ENCODE measurements at regions of chr1 and their contacts with region 1.

Region 1: DNA sequence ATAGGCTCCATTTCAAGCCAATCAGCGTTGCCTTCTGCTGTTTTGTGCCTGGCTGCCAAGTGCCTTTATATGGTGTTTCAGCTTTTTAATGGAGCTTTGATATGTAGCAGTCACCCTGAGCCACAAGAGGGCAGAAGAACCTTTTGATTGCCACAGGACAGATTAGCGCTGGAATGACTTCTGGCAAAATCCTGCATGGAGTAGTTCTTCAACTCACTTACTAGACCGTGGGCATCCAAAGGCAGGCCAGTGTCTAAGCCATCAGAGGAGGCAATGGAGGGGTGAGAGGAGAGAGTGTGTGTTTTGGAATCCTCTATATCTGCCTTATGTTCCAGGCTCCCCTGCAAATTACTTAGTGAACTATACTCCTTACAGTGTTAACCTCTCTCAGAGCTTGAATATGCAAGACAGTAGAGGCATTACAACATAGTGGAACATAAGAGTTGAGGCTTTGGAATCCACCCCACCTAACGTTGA is 56.2 kb downstream of the ST3GAL3 start:
- DNase-seq: peak; percentile 64
- ATAC-seq: peak; percentile 66
- H3K4me3 Mint-ChIP-seq: no peak overlapping the region
- H3K27ac Mint-ChIP-seq: no peak overlapping the region
- H3K4me1 Mint-ChIP-seq: peaks cover 16% of the 10 kb centered on the region
- H3K27me3 Mint-ChIP-seq: no peaks in the 10 kb centered on the region
- CTCF ChIP-seq: peak; percentile 72

Region 2: DNA sequence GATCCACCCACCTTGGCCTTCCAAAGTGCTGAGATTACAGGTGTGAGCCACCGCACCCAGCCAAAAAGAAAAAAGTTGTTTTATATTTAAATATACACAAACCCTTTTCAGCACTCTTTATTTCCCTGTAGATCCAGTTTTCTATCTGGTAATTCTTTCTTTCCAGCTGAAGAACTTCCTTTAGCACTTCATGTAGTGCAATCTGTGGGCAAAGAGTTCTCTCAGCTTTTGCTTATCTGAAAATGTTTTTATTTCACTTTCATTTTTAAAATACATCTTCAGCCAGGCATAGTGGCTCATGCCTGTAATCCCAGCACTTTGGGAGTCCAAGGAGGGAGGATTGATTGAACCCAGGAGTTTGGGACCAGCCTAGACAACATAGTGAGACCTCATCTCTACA is 281.3 kb before region 1 on chr1:
- CTCF ChIA-PET with region 1: no interaction called
- POLR2A ChIA-PET with region 1: no interaction called
- DNase-seq: no peak
- ATAC-seq: no peak
- H3K4me3 Mint-ChIP-seq: no peak overlapping the region
- H3K27ac Mint-ChIP-seq: no peak overlapping the region
- H3K4me1 Mint-ChIP-seq: no peaks in the 10 kb centered on the region
- H3K27me3 Mint-ChIP-seq: peaks cover 8% of the 10 kb centered on the region
- CTCF ChIP-seq: no peak

Region 3: GRCh38 chr1:43796111-43796581 is 32.6 kb after region 1 on chr1:
- CTCF ChIA-PET with region 1: interaction called, 13 read pairs
- POLR2A ChIA-PET with region 1: no interaction called
- DNase-seq: no peak
- ATAC-seq: no peak
- H3K4me3 Mint-ChIP-seq: no peak overlapping the region
- H3K27ac Mint-ChIP-seq: no peak overlapping the region
- H3K4me1 Mint-ChIP-seq: no peaks in the 10 kb centered on the region
- H3K27me3 Mint-ChIP-seq: no peaks in the 10 kb centered on the region; the same call in 1 of the 2 replicates
- CTCF ChIP-seq: no peak

Region 4: DNA sequence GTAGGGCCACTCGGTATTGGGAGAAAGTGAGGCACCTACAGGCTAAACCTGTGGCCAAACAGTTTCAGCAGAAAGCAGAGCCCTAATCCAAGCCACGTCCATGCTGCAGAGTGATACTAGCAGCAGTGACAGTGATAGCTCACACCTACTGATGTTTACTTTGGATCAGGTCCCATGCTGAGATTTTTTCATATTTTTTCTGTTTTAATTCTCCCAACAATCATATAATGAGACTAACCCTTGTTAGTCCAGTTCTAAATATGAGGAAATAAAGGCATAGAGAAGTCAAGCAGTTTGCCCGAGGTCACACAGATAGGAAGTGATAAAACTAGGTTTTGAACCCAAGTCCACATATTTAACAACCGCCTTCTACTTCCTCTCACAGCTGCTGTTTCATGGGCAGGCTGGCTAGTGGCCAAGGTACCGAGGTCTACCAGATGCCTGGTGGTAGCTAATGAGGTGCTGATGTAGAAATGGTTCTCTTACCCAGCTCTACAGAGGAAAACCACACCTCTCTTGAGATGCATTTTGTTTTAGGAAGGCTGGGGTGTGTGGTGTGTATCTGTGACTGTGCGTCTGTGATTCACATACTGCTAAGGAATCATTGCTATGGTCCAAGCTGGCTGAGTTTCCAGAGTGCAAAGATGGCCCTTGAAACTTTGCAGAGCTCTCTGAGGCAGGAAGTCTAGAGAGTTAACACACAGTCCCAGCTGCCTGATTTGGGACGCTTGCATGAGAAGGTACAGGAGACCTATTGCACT is 89.8 kb after region 1 on chr1:
- CTCF ChIA-PET with region 1: interaction called, 11 read pairs
- POLR2A ChIA-PET with region 1: no interaction called
- DNase-seq: no peak
- ATAC-seq: 0 out of 2 replicates have a peak, but pooled peaks have one; percentile 24
- H3K4me3 Mint-ChIP-seq: no peak overlapping the region
- H3K27ac Mint-ChIP-seq: no peak overlapping the region
- H3K4me1 Mint-ChIP-seq: peaks cover 14% of the 10 kb centered on the region
- H3K27me3 Mint-ChIP-seq: no peaks in the 10 kb centered on the region; the same call in 1 of the 2 replicates
- CTCF ChIP-seq: no peak

Region 5: GRCh38 chr1:43924516-43924915 is 161.0 kb after region 1 on chr1:
- CTCF ChIA-PET with region 1: interaction called, 992 read pairs
- POLR2A ChIA-PET with region 1: no interaction called
- DNase-seq: no peak
- ATAC-seq: no peak
- H3K4me3 Mint-ChIP-seq: no peak overlapping the region
- H3K27ac Mint-ChIP-seq: no peak overlapping the region
- H3K4me1 Mint-ChIP-seq: peaks cover under 1% of the 10 kb centered on the region
- H3K27me3 Mint-ChIP-seq: no peaks in the 10 kb centered on the region; the same call in 1 of the 2 replicates
- CTCF ChIP-seq: no peak

Region 6: GRCh38 chr1:43952731-43953346 is 189.3 kb after region 1 on chr1:
- CTCF ChIA-PET with region 1: interaction called, 75 read pairs
- POLR2A ChIA-PET with region 1: no interaction called
- DNase-seq: peak; percentile 66
- ATAC-seq: peak; percentile 96
- H3K4me3 Mint-ChIP-seq: no peak overlapping the region
- H3K27ac Mint-ChIP-seq: peak overlapping the region; percentile 50; the same call in 1 of the 2 replicates
- H3K4me1 Mint-ChIP-seq: peaks cover 18% of the 10 kb centered on the region
- H3K27me3 Mint-ChIP-seq: no peaks in the 10 kb centered on the region
- CTCF ChIP-seq: no peak

Region 7: GRCh38 chr1:43991476-43992231 is 228.1 kb after region 1 on chr1 and contains the start of gene CCDC24:
- CTCF ChIA-PET with region 1: interaction called, 16 read pairs
- POLR2A ChIA-PET with region 1: interaction called, 3 read pairs
- DNase-seq: peak; percentile 82
- ATAC-seq: peak; percentile 70
- H3K4me3 Mint-ChIP-seq: peak within 1 kb of the TSS; percentile 86
- H3K27ac Mint-ChIP-seq: peak within 1 kb of the TSS; percentile 93
- H3K4me1 Mint-ChIP-seq: peaks cover 22% of the 10 kb centered on the region
- H3K27me3 Mint-ChIP-seq: peaks cover 18% of the 10 kb centered on the region
- CTCF ChIP-seq: no peak
- total RNA-seq, gene CCDC24: 12.1 to 20.1 TPM (median 19.2 TPM) in 3 replicates

Region 8: DNA sequence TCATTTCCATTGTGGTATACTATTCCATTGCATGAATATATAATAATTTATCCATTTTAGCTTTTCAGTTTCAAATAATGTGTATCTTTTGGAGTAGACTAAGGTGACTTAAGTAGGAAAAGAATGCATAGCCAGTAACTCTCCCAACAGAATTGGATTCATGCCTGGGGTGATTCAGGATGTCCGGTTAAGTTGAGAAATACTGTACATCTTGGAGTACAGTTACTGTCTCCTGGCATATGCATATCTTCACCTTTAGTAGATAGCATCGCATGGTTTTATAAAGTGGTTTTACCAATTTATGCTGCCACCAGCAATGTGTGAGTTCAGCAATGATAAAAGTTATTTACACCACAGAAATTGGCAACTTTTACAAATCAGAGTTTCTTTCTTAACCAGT is 286.3 kb after region 1 on chr1:
- CTCF ChIA-PET with region 1: interaction called, 13 read pairs
- POLR2A ChIA-PET with region 1: no interaction called
- DNase-seq: no peak
- ATAC-seq: no peak
- H3K4me3 Mint-ChIP-seq: no peak overlapping the region
- H3K27ac Mint-ChIP-seq: no peak overlapping the region
- H3K4me1 Mint-ChIP-seq: no peaks in the 10 kb centered on the region
- H3K27me3 Mint-ChIP-seq: peaks cover 17% of the 10 kb centered on the region
- CTCF ChIP-seq: no peak

Measured in WTC11 (cell line).